T-cell (primary cell): ENCODE measurements at regions of chr4 and their contacts with region 1.

Region 1: DNA sequence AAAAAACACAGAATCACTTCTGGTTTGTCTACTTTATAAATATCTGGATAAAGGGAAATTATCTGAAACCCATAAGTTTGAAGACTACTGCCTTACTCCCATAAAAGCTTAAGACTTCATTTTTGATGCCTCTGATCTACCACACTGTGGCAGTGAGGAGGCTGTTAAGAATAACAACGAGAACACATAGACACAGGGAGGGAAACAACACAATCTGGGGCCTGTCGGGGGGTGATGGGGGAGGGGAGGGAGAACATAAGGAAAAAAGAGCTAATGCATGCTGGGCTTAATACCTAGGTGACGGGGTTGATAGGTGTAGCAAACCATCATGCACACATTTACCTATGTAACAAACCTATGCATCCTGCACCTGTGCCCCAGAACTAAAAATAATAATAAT is 573.7 kb downstream of the GBA3 start:
- DNase-seq: no peak
- ATAC-seq: no peak
- H3K4me3 ChIP-seq: no peak overlapping the region
- H3K4me3 Mint-ChIP-seq: no peak overlapping the region
- H3K27ac ChIP-seq: no peak overlapping the region
- H3K27ac Mint-ChIP-seq: no peak overlapping the region
- H3K4me1 ChIP-seq: no peaks in the 10 kb centered on the region
- H3K4me1 Mint-ChIP-seq: no peaks in the 10 kb centered on the region
- H3K27me3 ChIP-seq: no peaks in the 10 kb centered on the region
- H3K27me3 Mint-ChIP-seq: no peaks in the 10 kb centered on the region

Region 2: DNA sequence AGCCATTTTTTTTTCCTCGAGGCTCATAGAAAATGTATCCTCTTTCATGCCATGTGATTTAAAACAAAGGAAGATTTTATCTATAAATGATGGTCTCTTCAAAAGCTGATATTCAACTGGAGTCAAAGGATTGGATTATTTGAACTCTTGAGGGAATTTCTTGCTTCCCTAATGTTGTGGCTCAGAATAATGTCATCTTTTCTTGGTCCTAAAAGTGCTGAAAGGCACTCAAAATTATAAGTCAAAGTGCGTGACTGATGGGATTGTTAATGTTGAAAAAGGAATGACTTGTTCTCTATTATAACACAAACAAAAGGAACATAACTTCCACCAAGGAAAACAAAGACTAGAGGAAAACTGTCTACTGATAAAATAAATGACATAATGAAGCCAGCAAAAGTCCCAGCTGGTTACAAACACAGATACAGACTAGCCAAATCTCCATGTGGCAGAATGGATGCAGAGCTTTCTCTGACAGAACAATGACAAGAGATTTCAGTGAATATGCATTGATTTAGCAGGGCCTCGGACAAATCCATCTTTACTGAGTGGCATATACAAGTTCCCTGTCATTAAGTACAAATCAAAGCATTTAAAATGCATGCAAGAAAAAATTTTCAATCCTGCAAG is 21.1 kb before region 1 on chr4:
- CTCF ChIA-PET with region 1: no interaction called
- POLR2A ChIA-PET with region 1: no interaction called
- DNase-seq: no peak
- ATAC-seq: no peak
- H3K4me3 ChIP-seq: no peak overlapping the region
- H3K4me3 Mint-ChIP-seq: no peak overlapping the region
- H3K27ac ChIP-seq: no peak overlapping the region
- H3K27ac Mint-ChIP-seq: no peak overlapping the region
- H3K4me1 ChIP-seq: no peaks in the 10 kb centered on the region
- H3K4me1 Mint-ChIP-seq: no peaks in the 10 kb centered on the region
- H3K27me3 ChIP-seq: no peaks in the 10 kb centered on the region
- H3K27me3 Mint-ChIP-seq: no peaks in the 10 kb centered on the region

Region 3: GRCh38 chr4:23279377-23279988 is 13.1 kb after region 1 on chr4:
- CTCF ChIA-PET with region 1: no interaction called
- POLR2A ChIA-PET with region 1: interaction called in 1 of 2 experiments, 13 read pairs
- DNase-seq: no peak
- ATAC-seq: no peak
- H3K4me3 ChIP-seq: no peak overlapping the region
- H3K4me3 Mint-ChIP-seq: no peak overlapping the region
- H3K27ac ChIP-seq: no peak overlapping the region
- H3K27ac Mint-ChIP-seq: no peak overlapping the region
- H3K4me1 ChIP-seq: no peaks in the 10 kb centered on the region
- H3K4me1 Mint-ChIP-seq: no peaks in the 10 kb centered on the region
- H3K27me3 ChIP-seq: no peaks in the 10 kb centered on the region
- H3K27me3 Mint-ChIP-seq: no peaks in the 10 kb centered on the region

Region 4: DNA sequence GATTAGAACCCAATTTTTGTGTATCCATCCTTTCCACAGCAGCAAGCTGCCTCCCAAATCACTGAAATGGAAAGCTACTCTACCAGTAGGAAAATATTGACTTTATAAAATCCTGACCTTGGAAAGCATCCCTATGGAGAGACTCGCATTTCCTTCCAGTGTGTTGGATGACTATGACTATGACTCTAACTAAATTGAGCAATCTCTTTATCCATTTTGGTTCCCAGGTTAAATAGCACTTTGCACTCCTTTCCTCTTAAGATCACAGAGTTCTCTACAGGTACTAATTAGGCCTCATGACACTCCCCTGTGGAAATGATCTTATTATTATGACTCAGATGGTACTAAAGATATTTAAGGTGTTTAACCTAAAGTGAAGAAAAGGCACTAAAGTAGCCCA is 191.7 kb after region 1 on chr4:
- CTCF ChIA-PET with region 1: no interaction called
- POLR2A ChIA-PET with region 1: no interaction called
- DNase-seq: no peak
- ATAC-seq: no peak
- H3K4me3 ChIP-seq: no peak overlapping the region
- H3K4me3 Mint-ChIP-seq: no peak overlapping the region
- H3K27ac ChIP-seq: no peak overlapping the region
- H3K27ac Mint-ChIP-seq: no peak overlapping the region
- H3K4me1 ChIP-seq: no peaks in the 10 kb centered on the region
- H3K4me1 Mint-ChIP-seq: no peaks in the 10 kb centered on the region
- H3K27me3 ChIP-seq: no peaks in the 10 kb centered on the region
- H3K27me3 Mint-ChIP-seq: peaks cover 0 to 3% of the 10 kb centered on the region in 2 donors